Natural killer cell (primary cell): ENCODE measurements at regions of chr19 and their contacts with region 1.

Region 1: GRCh38 chr19:50724522-50725217 is 1.5 kb downstream of the CLEC11A start:
- DNase-seq: peak; percentile 93 to 95
- ATAC-seq: peak; percentile 86 to 95 (median 88)
- H3K4me3 ChIP-seq: peak overlapping the region; percentile 58
- H3K4me3 Mint-ChIP-seq: peak overlapping the region; percentile 85
- H3K27ac ChIP-seq: peak overlapping the region; percentile 86
- H3K27ac Mint-ChIP-seq: peak overlapping the region; percentile 61 to 86
- H3K4me1 ChIP-seq: peaks cover 37% of the 10 kb centered on the region
- H3K4me1 Mint-ChIP-seq: peaks cover 0 to 59% of the 10 kb centered on the region in 2 donors
- H3K27me3 ChIP-seq: peaks cover 18% of the 10 kb centered on the region
- H3K27me3 Mint-ChIP-seq: peaks cover 19 to 32% of the 10 kb centered on the region in 2 donors
- CTCF ChIP-seq: peak; percentile 75

Region 2: DNA sequence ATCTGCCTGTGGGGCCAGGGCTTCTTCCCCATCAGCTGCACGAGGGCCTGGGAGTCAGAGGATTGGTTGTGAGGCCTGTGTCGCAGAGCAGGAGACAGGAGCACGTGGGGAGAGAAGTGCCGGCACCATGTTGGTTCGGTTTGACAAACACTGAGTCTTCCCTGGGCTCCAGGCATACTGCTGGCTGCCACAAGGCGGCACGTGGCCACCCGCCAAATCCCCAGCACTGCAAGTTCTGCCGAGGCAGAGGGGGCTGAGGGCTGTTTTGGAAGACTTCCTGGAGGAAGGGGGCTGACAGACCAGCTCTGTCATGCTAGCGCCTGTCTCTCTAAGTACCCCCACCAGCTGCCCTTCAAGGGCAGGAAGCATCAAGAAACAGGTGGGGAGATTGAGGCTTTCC is 14.6 kb before region 1 on chr19:
- intact Hi-C with region 1: no loop called
- DNase-seq: no peak
- ATAC-seq: no peak
- H3K4me3 ChIP-seq: no peak overlapping the region
- H3K4me3 Mint-ChIP-seq: no peak overlapping the region
- H3K27ac ChIP-seq: no peak overlapping the region
- H3K27ac Mint-ChIP-seq: no peak overlapping the region
- H3K4me1 ChIP-seq: peaks cover 23% of the 10 kb centered on the region
- H3K4me1 Mint-ChIP-seq: peaks cover 15 to 23% of the 10 kb centered on the region in 2 donors
- H3K27me3 ChIP-seq: peaks cover 2% of the 10 kb centered on the region
- H3K27me3 Mint-ChIP-seq: peaks cover 0 to 3% of the 10 kb centered on the region in 2 donors
- CTCF ChIP-seq: no peak

Region 3: DNA sequence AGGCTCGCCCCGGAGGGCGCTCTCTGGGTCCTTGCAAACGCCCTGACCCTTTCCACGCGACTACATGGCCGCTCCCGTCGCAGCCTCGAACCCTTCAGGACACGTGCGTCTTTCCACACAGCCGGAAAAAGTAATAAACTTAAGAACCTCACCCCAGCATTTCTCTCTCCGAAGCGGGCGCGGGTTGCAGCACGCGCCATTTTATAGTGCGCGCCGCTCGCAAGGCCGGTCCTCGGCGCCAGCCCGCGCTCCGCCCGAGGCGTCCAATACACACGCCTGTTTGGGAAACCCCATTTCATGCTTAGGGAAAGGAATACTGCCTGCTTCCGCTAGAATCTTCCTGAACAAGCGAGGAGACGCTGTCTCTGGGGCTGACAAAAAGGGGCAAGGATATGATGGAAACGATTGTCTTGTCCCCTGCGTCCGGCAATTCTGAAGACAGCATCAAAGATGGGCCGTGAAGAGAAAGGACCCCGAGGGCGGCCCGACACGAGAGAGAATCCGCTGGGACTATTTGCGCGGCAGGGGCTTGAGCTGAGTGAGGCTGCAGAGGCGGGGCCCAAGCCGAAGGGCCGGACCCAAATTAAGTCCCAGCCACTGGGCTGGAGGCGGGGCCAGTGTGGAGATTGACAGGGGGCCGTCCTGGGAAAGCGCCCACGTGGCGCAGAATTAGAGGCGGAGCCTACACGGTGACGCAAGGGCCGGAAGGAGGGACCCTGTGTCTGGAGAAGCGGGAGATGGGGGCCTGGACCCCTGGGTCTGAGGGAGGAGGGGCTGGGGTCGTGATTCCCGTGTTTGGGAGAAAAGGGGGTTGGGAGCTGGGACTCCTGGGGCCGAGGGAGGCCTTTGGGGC is 80.0 kb after region 1 on chr19:
- intact Hi-C with region 1: loop called (anchors 10 kb)
- DNase-seq: peak; percentile 97 to 98
- ATAC-seq: peak; percentile 94 to 98 (median 95)
- H3K4me3 ChIP-seq: peak overlapping the region; percentile 86
- H3K4me3 Mint-ChIP-seq: peak overlapping the region; percentile 99
- H3K27ac ChIP-seq: peak overlapping the region; percentile 94
- H3K27ac Mint-ChIP-seq: peak overlapping the region; percentile 100
- H3K4me1 ChIP-seq: peaks cover 17% of the 10 kb centered on the region
- H3K4me1 Mint-ChIP-seq: peaks cover 23 to 43% of the 10 kb centered on the region in 2 donors
- H3K27me3 ChIP-seq: no peaks in the 10 kb centered on the region
- H3K27me3 Mint-ChIP-seq: no peaks in the 10 kb centered on the region
- CTCF ChIP-seq: no peak